GM12878 (cell line): ENCODE measurements at regions of chr12 and their contacts with region 1.

Region 1: DNA sequence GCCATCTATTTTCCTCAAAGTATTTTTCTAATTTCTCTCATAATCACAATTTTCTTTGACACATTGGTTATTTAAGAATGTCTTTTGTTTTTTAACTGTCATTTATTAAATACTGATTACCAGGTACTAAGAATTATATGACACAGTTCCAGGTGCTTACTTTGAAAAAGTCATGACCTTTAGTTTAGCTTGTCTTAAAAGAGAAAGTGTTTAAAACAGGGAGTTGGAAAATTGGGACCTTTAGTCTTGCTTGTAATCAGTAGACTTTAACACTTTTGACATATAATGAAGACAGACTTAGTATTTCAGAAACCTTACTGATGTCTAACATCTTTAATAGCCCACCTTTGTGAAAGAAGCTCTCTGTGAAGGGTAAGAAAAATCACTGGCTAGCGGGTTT is 19.2 kb downstream of the CREBL2 start:
- DNase-seq: no peak
- ATAC-seq: no peak
- H3K4me3 ChIP-seq: no peak overlapping the region
- H3K27ac ChIP-seq: no peak overlapping the region
- H3K4me1 ChIP-seq: no peaks in the 10 kb centered on the region
- H3K27me3 ChIP-seq: no peaks in the 10 kb centered on the region
- CTCF ChIP-seq: no peak
- EP300 ChIP-seq: no peak
- POLR2A ChIP-seq: no peak
- RAD21 ChIP-seq: no peak

Region 2: DNA sequence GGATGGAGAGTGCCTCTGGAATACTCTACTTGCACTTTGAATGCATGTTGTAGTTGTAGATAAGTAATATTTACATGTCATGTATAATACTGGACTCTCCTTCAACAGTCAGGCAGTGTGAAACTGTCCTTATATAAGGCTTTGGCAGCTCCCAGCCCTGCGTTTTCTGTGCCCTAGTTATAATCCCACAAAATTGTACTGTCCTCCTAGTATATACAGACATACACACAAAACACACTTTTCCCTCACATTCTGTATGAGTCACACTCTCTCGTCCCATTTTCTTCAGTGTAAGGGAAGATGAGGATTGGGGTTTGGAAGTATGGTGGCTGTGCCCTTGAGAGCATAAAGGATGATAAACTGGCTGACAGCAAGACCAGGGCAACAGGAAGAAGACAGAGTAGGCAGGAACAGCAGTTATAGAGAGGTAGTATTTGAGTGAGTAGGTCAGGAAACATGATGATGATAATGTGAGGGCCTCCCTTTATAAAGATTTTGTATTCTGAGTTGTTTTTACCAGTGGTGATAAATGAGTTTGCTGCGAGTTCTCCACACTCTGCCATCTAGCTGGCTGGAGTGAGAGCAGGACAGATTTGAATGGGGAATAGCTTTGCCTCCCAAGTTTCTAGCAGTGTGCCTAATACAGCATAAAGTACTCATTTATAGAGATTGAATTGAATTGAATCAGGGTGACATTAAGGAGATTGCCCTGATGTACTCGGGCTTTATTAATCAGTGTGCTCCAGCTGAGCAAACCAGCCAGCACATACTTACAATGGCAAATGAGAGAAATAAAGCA is 14.1 kb before region 1 on chr12:
- CTCF ChIA-PET with region 1: interaction called, 31 read pairs
- POLR2A ChIA-PET with region 1: interaction called, 4 read pairs
- RAD21 ChIA-PET with region 1: interaction called, 3 read pairs
- SMC1A ChIA-PET with region 1: interaction called, 28 read pairs
- in situ Hi-C with region 1: no loop called
- intact Hi-C with region 1: no loop called
- DNase-seq: no peak
- ATAC-seq: no peak
- H3K4me3 ChIP-seq: no peak overlapping the region
- H3K27ac ChIP-seq: no peak overlapping the region
- H3K4me1 ChIP-seq: no peaks in the 10 kb centered on the region; the same call in 1 of the 2 replicates
- H3K27me3 ChIP-seq: no peaks in the 10 kb centered on the region
- CTCF ChIP-seq: no peak
- EP300 ChIP-seq: no peak
- POLR2A ChIP-seq: no peak
- RAD21 ChIP-seq: no peak